Activated CD8-positive, alpha-beta T cell treated with anti-CD3 and anti-CD28 coated beads for 36 hours (primary cell): ENCODE measurements at regions of chr9 and their contacts with region 1.

Region 1: GRCh38 chr9:135085830-135086546 is 1.5 kb upstream of the OLFM1 start:
- DNase-seq: peak; percentile 73
- ATAC-seq: peak; percentile 64
- H3K4me3 Mint-ChIP-seq: no peak overlapping the region
- H3K27ac Mint-ChIP-seq: no peak overlapping the region
- H3K4me1 Mint-ChIP-seq: peaks cover 3% of the 10 kb centered on the region
- H3K27me3 Mint-ChIP-seq: peaks cover 42% of the 10 kb centered on the region
- CTCF ChIP-seq: peak; percentile 80

Region 2: GRCh38 chr9:134983074-134983473 is 102.9 kb before region 1 on chr9:
- CTCF ChIA-PET with region 1: no interaction called
- POLR2A ChIA-PET with region 1: no interaction called
- intact Hi-C with region 1: no loop called
- DNase-seq: peak; percentile 8
- ATAC-seq: no peak
- H3K4me3 Mint-ChIP-seq: no peak overlapping the region
- H3K27ac Mint-ChIP-seq: no peak overlapping the region
- H3K4me1 Mint-ChIP-seq: no peaks in the 10 kb centered on the region
- H3K27me3 Mint-ChIP-seq: no peaks in the 10 kb centered on the region
- CTCF ChIP-seq: no peak

Region 3: DNA sequence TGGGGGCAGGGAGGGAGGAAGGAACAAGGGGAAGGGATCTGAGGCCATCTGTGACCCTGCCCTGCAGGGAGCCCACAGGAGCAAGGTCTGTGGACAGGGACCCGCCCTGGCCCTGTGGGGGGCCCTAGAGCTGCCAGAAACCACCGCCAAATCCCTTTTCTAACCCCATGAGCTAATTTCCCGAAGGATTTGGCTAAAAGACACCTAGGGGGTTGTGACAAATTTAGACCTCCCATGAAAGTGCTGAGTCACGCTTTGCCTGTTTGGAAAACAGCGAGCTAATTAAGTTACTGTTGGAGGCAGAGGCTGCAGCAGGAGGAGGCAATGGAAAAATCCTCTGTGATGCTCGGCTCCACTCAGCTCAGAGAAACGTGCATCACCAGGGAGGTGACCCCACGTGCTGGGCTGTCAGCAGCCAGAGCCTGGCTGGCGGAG is 51.4 kb after region 1 on chr9:
- CTCF ChIA-PET with region 1: no interaction called
- POLR2A ChIA-PET with region 1: no interaction called
- intact Hi-C with region 1: no loop called
- DNase-seq: no peak
- ATAC-seq: no peak
- H3K4me3 Mint-ChIP-seq: no peak overlapping the region
- H3K27ac Mint-ChIP-seq: no peak overlapping the region
- H3K4me1 Mint-ChIP-seq: no peaks in the 10 kb centered on the region
- H3K27me3 Mint-ChIP-seq: peaks cover 11% of the 10 kb centered on the region
- CTCF ChIP-seq: no peak

Region 4: GRCh38 chr9:135343837-135344522 is 258.0 kb after region 1 on chr9:
- CTCF ChIA-PET with region 1: no interaction called
- POLR2A ChIA-PET with region 1: no interaction called
- intact Hi-C with region 1: loop called (anchors 5 kb)
- DNase-seq: peak; percentile 60
- ATAC-seq: peak; percentile 60
- H3K4me3 Mint-ChIP-seq: no peak overlapping the region
- H3K27ac Mint-ChIP-seq: no peak overlapping the region
- H3K4me1 Mint-ChIP-seq: no peaks in the 10 kb centered on the region
- H3K27me3 Mint-ChIP-seq: peaks cover 2% of the 10 kb centered on the region
- CTCF ChIP-seq: peak; percentile 99

Region 5: DNA sequence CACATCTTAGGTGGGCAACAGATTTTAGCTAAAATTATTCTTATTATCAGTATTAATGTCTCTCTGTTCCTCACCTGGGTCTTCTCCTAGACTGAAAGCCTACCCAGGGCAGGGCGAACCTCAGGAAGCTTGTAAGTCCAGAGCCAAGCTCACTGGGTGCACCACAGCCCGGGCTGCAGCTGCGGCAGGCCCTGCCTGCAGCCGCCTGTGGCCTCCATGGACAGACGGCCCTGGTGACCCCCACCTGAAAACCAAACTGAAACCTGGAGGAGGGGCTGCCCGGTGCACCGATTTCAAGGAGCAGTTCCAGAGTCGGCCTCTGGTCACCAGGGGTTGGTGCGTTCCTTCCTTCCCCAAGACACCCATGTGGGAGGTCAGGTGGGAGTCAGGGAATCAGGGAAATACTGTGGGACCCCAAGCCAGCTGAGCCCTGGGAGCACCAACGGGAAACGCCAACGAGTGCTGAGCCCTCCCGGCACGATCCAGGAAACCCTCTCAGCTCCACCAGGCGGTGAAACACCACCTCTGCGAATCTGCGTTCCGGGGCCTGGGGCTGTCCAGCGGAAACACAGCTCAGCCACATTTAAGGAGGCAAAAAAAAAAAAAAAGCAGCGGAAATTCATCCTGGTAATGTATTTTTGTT is 325.0 kb after region 1 on chr9:
- CTCF ChIA-PET with region 1: interaction called, 8 read pairs
- POLR2A ChIA-PET with region 1: no interaction called
- intact Hi-C with region 1: loop called (anchors 10 kb)
- DNase-seq: no peak
- ATAC-seq: no peak
- H3K4me3 Mint-ChIP-seq: no peak overlapping the region
- H3K27ac Mint-ChIP-seq: no peak overlapping the region
- H3K4me1 Mint-ChIP-seq: no peaks in the 10 kb centered on the region
- H3K27me3 Mint-ChIP-seq: peaks cover 5% of the 10 kb centered on the region
- CTCF ChIP-seq: no peak